Activated B cell treated with CpG ODN at 0.5 μM for 24 hours (primary cell): ENCODE measurements at regions of chr1 and their contacts with region 1.

Region 1: DNA sequence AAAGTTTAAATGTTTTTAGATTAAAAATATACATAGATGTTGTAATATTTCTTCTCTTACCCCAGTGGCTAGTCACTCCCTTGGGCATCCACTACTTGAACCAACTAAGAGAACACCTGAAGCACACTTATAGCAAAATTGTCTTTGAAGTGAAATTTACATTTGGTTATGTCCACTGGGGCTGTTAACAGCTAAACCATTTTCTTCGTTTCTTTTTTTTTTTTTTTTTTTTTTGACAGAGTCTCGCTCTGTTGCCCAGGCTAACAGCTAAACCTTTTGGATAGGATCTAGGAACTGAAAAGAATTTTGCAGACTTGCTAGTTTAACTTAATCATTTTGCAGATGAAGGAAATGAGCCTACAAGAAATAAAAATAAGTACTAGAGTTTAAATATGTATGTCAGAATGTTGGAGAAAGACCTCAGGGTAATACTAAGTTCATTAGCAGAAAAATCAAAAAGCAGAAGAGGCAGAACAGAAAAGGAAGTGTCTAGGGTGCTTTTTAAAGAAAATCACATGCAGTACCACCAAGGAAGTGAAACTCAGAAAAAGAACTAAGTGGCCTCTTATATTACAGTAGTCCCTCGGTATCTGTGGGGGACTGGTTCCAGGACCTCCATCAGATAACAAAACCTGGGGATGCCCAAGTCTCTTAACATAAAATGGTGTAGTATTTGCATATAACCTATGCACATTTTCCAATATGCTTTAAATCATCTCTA is 11.8 kb downstream of the DRAM2 start:
- DNase-seq: no peak
- ATAC-seq: peak; percentile 83
- H3K4me3 Mint-ChIP-seq: peak overlapping the region; percentile 52
- H3K27ac Mint-ChIP-seq: peak overlapping the region; percentile 95
- H3K4me1 Mint-ChIP-seq: peaks cover 96% of the 10 kb centered on the region
- H3K27me3 Mint-ChIP-seq: no peaks in the 10 kb centered on the region
- CTCF ChIP-seq: no peak

Region 2: DNA sequence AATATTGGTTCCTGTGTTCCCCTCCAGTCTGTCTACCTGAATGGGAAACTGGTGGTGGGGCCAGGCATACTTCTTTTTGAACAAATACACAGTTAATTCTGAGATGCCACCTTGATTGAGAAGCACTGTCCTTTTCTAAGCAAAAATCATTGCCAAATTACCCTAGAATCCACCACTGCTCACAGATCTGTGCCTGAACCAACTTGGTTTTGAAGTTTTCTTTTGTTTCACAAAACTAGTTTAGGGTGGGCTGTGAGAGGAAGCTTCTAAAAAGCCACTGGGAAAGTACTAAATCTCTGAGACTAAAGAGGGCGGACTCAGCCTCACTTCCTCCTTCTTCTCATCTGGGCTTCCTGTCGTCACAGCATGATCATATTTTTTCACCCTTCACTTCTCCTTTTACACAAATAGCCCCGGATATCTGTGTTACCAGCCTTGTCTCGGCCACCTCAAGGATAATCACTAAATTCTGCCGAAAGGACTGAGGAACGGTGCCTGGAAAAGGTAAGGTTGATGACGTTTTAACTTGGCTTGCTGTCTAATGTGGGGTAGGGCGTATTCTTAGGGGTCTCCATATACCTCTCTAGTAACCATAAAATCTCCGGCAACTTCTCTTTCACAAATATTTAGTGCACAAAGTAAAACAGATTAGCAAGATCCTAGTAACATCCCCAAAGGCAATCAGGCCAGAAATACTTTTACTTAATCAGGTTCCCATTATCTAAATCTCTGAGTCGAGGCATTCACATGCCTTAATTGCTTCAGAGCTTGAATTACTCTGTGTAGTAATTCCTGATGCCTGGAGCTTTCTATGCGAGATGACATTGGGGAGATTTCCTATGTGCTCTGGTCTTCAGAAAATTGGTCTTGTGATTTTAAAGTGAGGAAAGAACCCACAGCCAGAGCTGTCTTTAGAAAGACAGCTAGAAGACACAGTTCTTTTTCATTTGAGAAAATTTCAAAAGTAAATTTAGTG is 255.1 kb before region 1 on chr1 and contains the start of gene CD53:
- CTCF ChIA-PET with region 1: no interaction called
- POLR2A ChIA-PET with region 1: no interaction called
- intact Hi-C with region 1: loop called (anchors 2 kb)
- DNase-seq: peak; percentile 27
- ATAC-seq: peak; percentile 64
- H3K4me3 Mint-ChIP-seq: peak within 1 kb of the TSS; percentile 96
- H3K27ac Mint-ChIP-seq: peak within 1 kb of the TSS; percentile 99
- H3K4me1 Mint-ChIP-seq: peaks cover 75% of the 10 kb centered on the region
- H3K27me3 Mint-ChIP-seq: no peaks in the 10 kb centered on the region
- CTCF ChIP-seq: no peak
- total RNA-seq, gene CD53: 491 and 522 TPM in 2 replicates

Region 3: GRCh38 chr1:111030590-111030989 is 97.5 kb before region 1 on chr1:
- CTCF ChIA-PET with region 1: interaction called, 4 read pairs
- POLR2A ChIA-PET with region 1: interaction called, 3 read pairs
- intact Hi-C with region 1: loop called (anchors 5 kb)
- DNase-seq: no peak
- ATAC-seq: peak; percentile 70
- H3K4me3 Mint-ChIP-seq: no peak overlapping the region
- H3K27ac Mint-ChIP-seq: no peak overlapping the region
- H3K4me1 Mint-ChIP-seq: peaks cover 8% of the 10 kb centered on the region
- H3K27me3 Mint-ChIP-seq: no peaks in the 10 kb centered on the region
- CTCF ChIP-seq: peak; percentile 53

Region 4: GRCh38 chr1:111110197-111110899 is 17.7 kb before region 1 on chr1:
- CTCF ChIA-PET with region 1: no interaction called
- POLR2A ChIA-PET with region 1: no interaction called
- intact Hi-C with region 1: loop called (anchors 2 kb)
- DNase-seq: no peak
- ATAC-seq: no peak
- H3K4me3 Mint-ChIP-seq: no peak overlapping the region
- H3K27ac Mint-ChIP-seq: no peak overlapping the region
- H3K4me1 Mint-ChIP-seq: peaks cover 17% of the 10 kb centered on the region
- H3K27me3 Mint-ChIP-seq: no peaks in the 10 kb centered on the region
- CTCF ChIP-seq: no peak

Region 5: GRCh38 chr1:111203681-111204200 is 75.7 kb after region 1 on chr1:
- CTCF ChIA-PET with region 1: no interaction called
- POLR2A ChIA-PET with region 1: interaction called, 14 read pairs
- intact Hi-C with region 1: loop called (anchors 5 kb)
- DNase-seq: peak; percentile 80
- ATAC-seq: peak; percentile 59
- H3K4me3 Mint-ChIP-seq: peak overlapping the region; percentile 89
- H3K27ac Mint-ChIP-seq: peak overlapping the region; percentile 93
- H3K4me1 Mint-ChIP-seq: peaks cover 85% of the 10 kb centered on the region
- H3K27me3 Mint-ChIP-seq: no peaks in the 10 kb centered on the region
- CTCF ChIP-seq: no peak

Region 6: GRCh38 chr1:111346089-111346885 is 218.2 kb after region 1 on chr1:
- CTCF ChIA-PET with region 1: no interaction called
- POLR2A ChIA-PET with region 1: no interaction called
- intact Hi-C with region 1: loop called (anchors 1 kb)
- DNase-seq: peak; percentile 82
- ATAC-seq: peak; percentile 88
- H3K4me3 Mint-ChIP-seq: peak overlapping the region; percentile 93
- H3K27ac Mint-ChIP-seq: peak overlapping the region; percentile 85
- H3K4me1 Mint-ChIP-seq: peaks cover 13% of the 10 kb centered on the region
- H3K27me3 Mint-ChIP-seq: no peaks in the 10 kb centered on the region
- CTCF ChIP-seq: no peak

Region 7: GRCh38 chr1:111755331-111756123 is 627.4 kb after region 1 on chr1 and contains the start of gene DDX20:
- CTCF ChIA-PET with region 1: no interaction called
- POLR2A ChIA-PET with region 1: no interaction called
- intact Hi-C with region 1: loop called (anchors 5 kb)
- DNase-seq: peak; percentile 94
- ATAC-seq: peak; percentile 89
- H3K4me3 Mint-ChIP-seq: peak within 1 kb of the TSS; percentile 97
- H3K27ac Mint-ChIP-seq: peak within 1 kb of the TSS; percentile 96
- H3K4me1 Mint-ChIP-seq: peaks cover 30% of the 10 kb centered on the region
- H3K27me3 Mint-ChIP-seq: no peaks in the 10 kb centered on the region
- CTCF ChIP-seq: peak; percentile 55
- total RNA-seq, gene DDX20: 21.5 and 22.4 TPM in 2 replicates